ENCODE measurements at regions of chr3 and their contacts with region 1.

Region 1: GRCh38 chr3:183481582-183481981 is 53.2 kb upstream of the MCF2L2 start:
- DNase-seq: no peak
- H3K4me3 ChIP-seq: no peak overlapping the region
- H3K27ac ChIP-seq: no peak overlapping the region
- H3K4me1 ChIP-seq: peaks cover 24% of the 10 kb centered on the region
- H3K27me3 ChIP-seq: no peaks in the 10 kb centered on the region
- CTCF ChIP-seq: no peak

Region 2: GRCh38 chr3:183468424-183468823 is 13.2 kb before region 1 on chr3:
- CTCF ChIA-PET with region 1: no interaction called
- POLR2A ChIA-PET with region 1: no interaction called
- intact Hi-C with region 1: no loop called
- DNase-seq: no peak
- H3K4me3 ChIP-seq: no peak overlapping the region; the same call in 1 of the 2 replicates
- H3K27ac ChIP-seq: no peak overlapping the region
- H3K4me1 ChIP-seq: peaks cover 3% of the 10 kb centered on the region; the same call in 1 of the 2 replicates
- H3K27me3 ChIP-seq: no peaks in the 10 kb centered on the region
- CTCF ChIP-seq: no peak

Region 3: DNA sequence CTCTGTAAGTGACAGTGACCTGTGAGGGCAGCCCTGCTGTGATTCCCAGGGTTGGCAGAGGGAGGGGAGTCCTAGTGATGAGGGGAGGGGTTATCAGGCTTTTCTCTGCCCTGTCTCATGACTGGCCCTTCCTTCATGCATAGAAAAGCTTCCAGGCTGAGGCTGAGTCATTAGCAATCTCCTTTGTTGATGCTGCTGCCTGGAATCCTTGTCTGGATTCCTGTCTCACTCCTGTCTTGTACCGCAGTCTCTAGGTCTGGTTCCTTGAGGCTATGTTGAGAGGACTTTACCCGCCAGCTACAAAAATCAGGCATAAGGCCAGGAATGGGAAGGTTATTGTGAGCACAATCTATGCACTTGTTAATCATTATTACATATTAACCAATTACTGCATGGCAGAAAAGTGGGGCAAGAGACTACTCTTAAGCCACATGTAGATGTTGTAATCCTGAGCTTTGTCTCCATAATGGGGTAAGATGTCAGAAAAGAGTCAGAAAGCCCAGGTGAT is 66.7 kb after region 1 on chr3:
- CTCF ChIA-PET with region 1: interaction called, 3 read pairs
- POLR2A ChIA-PET with region 1: no interaction called
- intact Hi-C with region 1: loop called (anchors 5 kb)
- DNase-seq: peak; percentile 75 to 77
- H3K4me3 ChIP-seq: no peak overlapping the region
- H3K27ac ChIP-seq: no peak overlapping the region
- H3K4me1 ChIP-seq: no peaks in the 10 kb centered on the region
- H3K27me3 ChIP-seq: no peaks in the 10 kb centered on the region
- CTCF ChIP-seq: no peak

Region 4: DNA sequence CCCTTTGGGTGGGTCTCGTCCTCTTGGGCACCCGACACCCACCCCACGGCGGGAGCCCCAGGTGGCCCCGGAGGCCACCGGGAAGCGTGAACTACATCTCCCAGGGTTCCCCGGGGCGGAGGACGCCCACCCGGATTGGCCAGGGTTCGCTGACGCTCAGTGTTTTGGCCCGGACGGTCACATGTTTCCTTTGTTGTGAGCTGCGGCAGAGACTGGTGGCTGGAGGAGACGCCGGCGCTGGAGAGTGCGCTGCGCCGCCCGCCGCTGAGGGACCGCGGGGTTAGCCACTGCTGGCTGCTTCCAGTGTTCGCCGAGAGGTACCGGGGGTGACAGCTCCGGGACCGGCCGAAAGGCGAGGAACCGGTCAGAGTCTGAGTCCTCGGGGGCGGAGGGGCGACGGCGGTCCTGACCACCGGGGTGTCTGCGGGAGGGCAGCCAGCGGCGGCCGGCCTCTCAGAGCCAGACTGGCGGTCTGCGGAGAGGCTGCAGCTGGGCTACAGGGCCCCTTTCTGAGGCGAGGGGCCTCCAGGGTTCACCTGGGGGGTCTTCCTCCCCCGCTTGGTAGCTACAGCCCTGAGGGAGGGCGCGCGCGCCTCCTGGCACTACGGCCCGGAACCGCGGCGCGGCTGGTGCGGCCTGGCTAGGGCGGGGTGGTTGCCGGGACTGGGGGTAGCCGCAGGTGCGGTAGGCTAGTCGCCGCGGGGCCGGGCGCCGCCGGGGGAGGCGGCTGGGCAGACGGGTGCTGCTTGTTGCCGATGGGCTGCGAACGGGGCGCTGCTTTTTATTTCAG is 154.0 kb after region 1 on chr3 and contains the start of gene KLHL24:
- CTCF ChIA-PET with region 1: interaction called, 3 read pairs
- POLR2A ChIA-PET with region 1: no interaction called
- intact Hi-C with region 1: loop called (anchors 5 kb)
- DNase-seq: peak; percentile 91 to 96
- H3K4me3 ChIP-seq: peak within 1 kb of the TSS; percentile 85
- H3K27ac ChIP-seq: peak within 1 kb of the TSS; percentile 50
- H3K4me1 ChIP-seq: peaks cover 9% of the 10 kb centered on the region
- H3K27me3 ChIP-seq: no peaks in the 10 kb centered on the region
- CTCF ChIP-seq: peak; percentile 44; the same call in 1 of the 2 replicates
- total RNA-seq, gene KLHL24: 59.1 and 73.0 TPM in 2 replicates

Region 5: DNA sequence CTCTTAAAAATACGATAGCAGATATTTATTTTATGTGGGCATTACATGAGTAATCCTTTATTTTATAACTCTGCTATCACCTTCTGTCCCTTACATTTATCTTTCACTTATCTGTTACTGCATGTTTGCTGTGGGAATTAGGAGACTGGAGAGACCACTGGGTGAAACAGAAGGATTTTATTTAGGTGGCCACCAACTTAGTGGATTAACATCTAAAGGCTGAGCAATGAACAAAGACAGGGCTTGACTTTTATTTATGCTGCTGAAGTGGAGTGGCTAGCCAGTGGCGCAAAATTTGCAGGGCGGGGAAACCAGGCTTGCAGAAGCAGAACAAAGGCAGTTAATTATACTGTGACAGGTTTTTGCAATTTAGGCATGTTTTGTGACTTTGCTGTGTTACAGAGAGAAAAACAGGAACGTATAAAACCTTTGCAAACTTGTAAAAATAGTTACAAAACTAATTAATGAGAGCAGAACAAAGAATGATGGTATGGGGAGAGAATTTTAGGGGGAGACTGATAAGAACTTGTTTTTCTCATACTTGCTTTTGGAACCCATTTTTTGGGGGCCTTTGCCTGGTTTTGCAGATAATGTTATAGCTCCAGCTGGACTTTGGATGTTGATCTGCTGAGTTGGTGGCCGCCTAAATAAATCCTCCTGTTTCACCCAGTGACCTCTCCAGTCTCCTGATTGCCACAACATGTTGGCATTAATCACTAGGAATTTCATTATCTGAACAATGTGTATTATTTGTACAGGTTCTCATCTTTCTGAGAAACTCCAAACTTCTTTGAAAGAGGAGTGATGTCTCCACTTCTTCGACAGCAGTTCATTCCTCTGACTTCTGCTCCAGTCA is 171.9 kb after region 1 on chr3:
- CTCF ChIA-PET with region 1: interaction called, 10 read pairs
- POLR2A ChIA-PET with region 1: no interaction called
- intact Hi-C with region 1: no loop called
- DNase-seq: no peak
- H3K4me3 ChIP-seq: peak overlapping the region; percentile 3; the same call in 1 of the 2 replicates
- H3K27ac ChIP-seq: no peak overlapping the region
- H3K4me1 ChIP-seq: no peaks in the 10 kb centered on the region
- H3K27me3 ChIP-seq: no peaks in the 10 kb centered on the region
- CTCF ChIP-seq: no peak

Measured in PC-9 (cell line).